PC-9 (cell line): ENCODE measurements at regions of chr3 and their contacts with region 1.

Region 1: GRCh38 chr3:138329127-138329983 is at the start of gene NME9:
- DNase-seq: peak; percentile 58 to 83
- H3K4me3 ChIP-seq: peak within 1 kb of the TSS; percentile 78
- H3K27ac ChIP-seq: no peak within 1 kb of the TSS
- H3K4me1 ChIP-seq: peaks cover 7% of the 10 kb centered on the region
- H3K27me3 ChIP-seq: no peaks in the 10 kb centered on the region; the same call in 1 of the 2 replicates
- CTCF ChIP-seq: peak; percentile 54; the same call in 1 of the 2 replicates
- total RNA-seq, gene NME9: 1.3 TPM in 1 of 2 replicates, not detected in the other

Region 2: GRCh38 chr3:138180375-138181029 is 148.9 kb before region 1 on chr3:
- CTCF ChIA-PET with region 1: no interaction called
- POLR2A ChIA-PET with region 1: no interaction called
- intact Hi-C with region 1: loop called (anchors 2 kb)
- DNase-seq: no peak
- H3K4me3 ChIP-seq: no peak overlapping the region
- H3K27ac ChIP-seq: no peak overlapping the region
- H3K4me1 ChIP-seq: peaks cover 7% of the 10 kb centered on the region; the same call in 1 of the 2 replicates
- H3K27me3 ChIP-seq: no peaks in the 10 kb centered on the region
- CTCF ChIP-seq: peak; percentile 62

Region 3: GRCh38 chr3:138417559-138417982 is 88.2 kb after region 1 on chr3:
- CTCF ChIA-PET with region 1: interaction called, 4 read pairs
- POLR2A ChIA-PET with region 1: no interaction called
- intact Hi-C with region 1: loop called (anchors 5 kb)
- DNase-seq: peak; percentile 54 to 83
- H3K4me3 ChIP-seq: no peak overlapping the region
- H3K27ac ChIP-seq: no peak overlapping the region
- H3K4me1 ChIP-seq: no peaks in the 10 kb centered on the region
- H3K27me3 ChIP-seq: no peaks in the 10 kb centered on the region
- CTCF ChIP-seq: peak; percentile 88

Region 4: GRCh38 chr3:138686771-138687221 is 357.4 kb after region 1 on chr3:
- CTCF ChIA-PET with region 1: no interaction called
- POLR2A ChIA-PET with region 1: no interaction called
- intact Hi-C with region 1: loop called (anchors 10 kb)
- DNase-seq: peak; percentile 37 to 92
- H3K4me3 ChIP-seq: no peak overlapping the region
- H3K27ac ChIP-seq: peak overlapping the region; percentile 65
- H3K4me1 ChIP-seq: peaks cover 27% of the 10 kb centered on the region
- H3K27me3 ChIP-seq: no peaks in the 10 kb centered on the region
- CTCF ChIP-seq: no peak

Region 5: DNA sequence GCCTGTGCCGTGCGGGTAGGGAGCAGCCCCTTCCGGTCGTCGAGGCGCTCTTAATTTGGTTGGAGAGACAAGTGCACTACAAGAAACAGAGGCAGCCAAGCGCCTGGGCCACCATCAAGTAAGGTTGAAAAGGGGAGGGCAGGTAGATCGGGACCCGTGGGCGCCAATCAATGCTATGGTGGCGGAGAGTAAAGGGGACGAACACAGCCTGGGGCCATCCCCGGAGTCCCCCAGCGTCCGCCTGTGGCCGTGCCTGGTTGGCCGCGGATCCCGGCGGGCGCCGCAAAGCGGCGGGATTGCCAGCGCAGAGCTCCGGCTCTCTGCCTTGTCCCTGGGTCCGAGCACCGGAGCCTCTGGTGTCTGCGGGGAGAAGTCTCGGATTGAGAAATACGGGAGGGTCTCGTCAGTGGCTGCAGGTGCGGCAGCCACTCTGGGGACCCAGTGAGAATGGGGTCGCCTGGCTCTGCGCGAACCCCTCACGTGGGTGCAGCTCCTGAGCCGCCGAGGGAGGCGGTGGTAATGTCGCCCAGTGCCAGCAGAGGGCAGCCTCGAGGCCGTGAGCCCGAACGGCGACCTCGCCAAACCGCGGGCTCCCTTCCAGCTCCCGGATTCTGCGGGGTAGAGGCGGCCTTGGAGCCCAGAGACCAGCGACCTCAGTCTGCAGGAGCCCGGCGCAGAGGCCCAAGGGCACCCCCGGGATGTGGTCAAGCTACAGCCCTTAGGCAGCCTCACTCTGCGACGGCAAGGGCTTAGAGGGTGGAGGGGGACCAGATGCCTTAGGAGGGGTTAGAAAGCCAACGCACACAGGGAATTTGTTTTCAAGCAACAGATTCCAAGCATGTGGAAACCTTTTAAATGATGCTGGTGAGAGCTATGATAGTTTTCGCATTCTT is 606.7 kb after region 1 on chr3:
- CTCF ChIA-PET with region 1: interaction called, 14 read pairs
- POLR2A ChIA-PET with region 1: no interaction called
- intact Hi-C with region 1: no loop called
- DNase-seq: peak in 1 of 2 experiments; percentile 81
- H3K4me3 ChIP-seq: peak overlapping the region; percentile 76
- H3K27ac ChIP-seq: no peak overlapping the region
- H3K4me1 ChIP-seq: 0 out of 2 replicates have a peak, but pooled peaks cover 6% of the 10 kb centered on the region
- H3K27me3 ChIP-seq: no peaks in the 10 kb centered on the region
- CTCF ChIP-seq: peak; percentile 88